A673 (cell line): ENCODE measurements at regions of chr13 and their contacts with region 1.

Region 1: GRCh38 chr13:95588721-95589120 is 36.2 kb downstream of the CLDN10 start:
- DNase-seq: no peak
- H3K4me3 ChIP-seq: no peak overlapping the region
- H3K27ac ChIP-seq: no peak overlapping the region
- H3K4me1 ChIP-seq: no peaks in the 10 kb centered on the region
- H3K27me3 ChIP-seq: no peaks in the 10 kb centered on the region
- CTCF ChIP-seq: no peak

Region 2: DNA sequence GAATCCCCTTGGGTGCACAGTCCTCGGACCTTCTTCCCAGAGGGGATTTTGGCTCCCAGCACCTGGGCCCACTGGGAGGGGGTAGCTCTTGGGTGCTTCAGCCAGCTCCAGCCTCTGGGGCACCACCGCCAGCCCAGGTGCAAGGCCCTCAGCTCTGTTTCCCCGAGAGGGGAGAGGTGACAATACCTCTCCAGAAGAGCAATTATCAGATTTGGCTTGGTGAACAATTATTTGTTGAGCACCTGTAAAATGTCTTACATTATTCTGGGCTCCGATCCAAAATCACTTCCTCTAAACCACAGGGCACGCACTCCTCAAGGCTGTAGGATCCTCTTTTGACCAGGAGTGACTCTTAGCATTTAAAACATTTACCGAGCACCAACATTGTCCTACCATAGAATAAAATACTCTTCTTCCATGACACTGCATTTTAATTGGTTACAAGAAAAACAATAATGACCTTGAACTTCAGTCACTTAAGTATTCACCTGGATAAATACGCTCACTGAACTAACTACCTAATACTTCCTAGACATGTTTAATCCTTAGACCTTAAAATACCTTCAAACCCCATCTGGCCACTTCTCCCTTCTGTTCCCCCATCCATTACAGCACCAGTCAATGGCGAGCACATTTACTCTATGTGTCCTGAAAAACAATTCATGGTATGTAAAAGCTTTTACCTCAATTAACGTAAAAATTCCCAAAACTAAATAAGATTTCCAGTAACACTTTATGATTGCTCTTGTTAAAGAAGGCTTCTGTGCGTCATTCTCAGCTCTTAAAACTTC is 342.2 kb before region 1 on chr13:
- CTCF ChIA-PET with region 1: no interaction called
- POLR2A ChIA-PET with region 1: no interaction called
- intact Hi-C with region 1: no loop called
- DNase-seq: no peak
- H3K4me3 ChIP-seq: no peak overlapping the region
- H3K27ac ChIP-seq: no peak overlapping the region
- H3K4me1 ChIP-seq: peaks cover 3% of the 10 kb centered on the region
- H3K27me3 ChIP-seq: no peaks in the 10 kb centered on the region
- CTCF ChIP-seq: no peak

Region 3: DNA sequence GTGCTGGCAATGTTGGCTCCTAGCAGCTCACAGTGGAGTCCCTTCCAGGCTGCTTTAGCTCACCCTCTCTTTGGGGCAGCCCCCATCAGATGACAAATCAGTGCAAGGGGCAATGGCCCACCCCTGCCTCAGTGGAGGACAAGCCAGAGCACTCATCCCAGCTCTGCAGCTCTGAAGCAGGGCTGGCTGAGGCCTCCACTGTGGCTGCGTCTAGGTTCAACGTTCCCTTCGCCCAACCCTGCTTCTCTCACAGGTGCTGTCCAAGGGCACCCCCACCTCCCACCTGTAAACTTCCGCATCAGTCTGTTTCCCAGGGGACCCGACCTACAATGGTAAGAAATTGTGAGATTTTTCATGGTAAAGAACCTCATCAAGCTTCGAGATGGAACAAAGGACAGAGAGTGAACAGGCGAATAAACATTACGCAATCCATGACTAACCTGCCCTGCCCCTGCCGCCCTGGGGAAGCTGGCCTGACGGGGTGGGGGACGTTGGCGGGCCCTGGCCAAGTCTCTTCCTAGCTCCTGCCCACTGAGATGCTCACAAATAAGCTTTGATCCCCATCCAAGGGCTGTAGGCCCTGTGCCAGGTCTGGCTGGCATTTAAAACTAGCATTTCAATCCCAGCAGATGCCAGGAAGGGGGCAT is 15.3 kb after region 1 on chr13:
- CTCF ChIA-PET with region 1: interaction called, 10 read pairs
- POLR2A ChIA-PET with region 1: no interaction called
- intact Hi-C with region 1: no loop called
- DNase-seq: no peak
- H3K4me3 ChIP-seq: no peak overlapping the region
- H3K27ac ChIP-seq: no peak overlapping the region
- H3K4me1 ChIP-seq: no peaks in the 10 kb centered on the region
- H3K27me3 ChIP-seq: peaks cover 3% of the 10 kb centered on the region
- CTCF ChIP-seq: no peak

Region 4: GRCh38 chr13:95834134-95834765 is 245.5 kb after region 1 on chr13:
- CTCF ChIA-PET with region 1: no interaction called
- POLR2A ChIA-PET with region 1: no interaction called
- intact Hi-C with region 1: no loop called
- DNase-seq: peak; percentile 87
- H3K4me3 ChIP-seq: no peak overlapping the region
- H3K27ac ChIP-seq: no peak overlapping the region
- H3K4me1 ChIP-seq: peaks cover 8% of the 10 kb centered on the region
- H3K27me3 ChIP-seq: no peaks in the 10 kb centered on the region
- CTCF ChIP-seq: peak; percentile 83